ENCODE measurements at regions of chr2 and their contacts with region 1.

Region 1: DNA sequence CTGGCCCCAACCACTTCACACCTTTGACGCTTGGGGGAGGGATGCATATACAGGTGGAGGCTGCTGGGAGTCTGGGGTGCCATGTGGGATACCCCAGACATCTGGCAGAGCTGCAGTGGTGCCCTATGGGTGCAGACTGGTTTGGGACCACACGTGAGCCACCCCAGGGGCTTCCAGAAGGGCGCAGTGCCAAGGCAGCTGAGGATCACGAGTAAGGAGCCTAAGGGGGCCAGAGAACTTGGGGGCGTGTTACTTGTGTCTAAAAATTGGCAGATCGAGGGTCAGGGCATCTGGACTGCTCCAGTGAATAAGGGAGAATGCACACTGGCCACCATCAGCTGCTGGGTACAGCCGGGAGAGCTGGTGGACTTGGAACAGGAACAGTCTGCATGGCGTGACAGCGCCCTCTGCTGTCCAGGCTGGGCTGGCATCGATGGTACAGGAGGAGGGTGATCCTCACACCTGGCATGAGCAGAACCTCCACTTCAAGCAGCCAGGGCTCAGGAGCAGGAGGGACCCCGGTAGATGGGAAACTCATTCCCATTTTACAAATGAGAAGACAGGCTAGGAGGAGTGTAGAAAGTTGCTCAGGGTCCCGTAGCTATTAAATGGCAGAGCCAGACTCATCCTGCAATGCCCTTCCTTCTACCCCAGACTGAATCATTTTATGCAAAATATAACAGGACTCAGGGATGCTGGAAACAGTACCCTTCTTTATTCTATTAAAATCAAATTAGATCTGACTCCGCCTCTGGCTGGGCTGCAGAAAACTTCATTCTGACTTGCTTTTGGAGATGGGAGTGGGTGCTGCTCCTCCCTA is 60.4 kb downstream of the ATOH8 start:
- DNase-seq: peak; percentile 87
- H3K4me3 Mint-ChIP-seq: no peak overlapping the region
- H3K27ac Mint-ChIP-seq: no peak overlapping the region
- H3K4me1 Mint-ChIP-seq: no peaks in the 10 kb centered on the region
- H3K27me3 Mint-ChIP-seq: peaks cover 6% of the 10 kb centered on the region

Region 2: GRCh38 chr2:85642725-85643124 is 171.5 kb before region 1 on chr2:
- CTCF ChIA-PET with region 1: interaction called, 17 read pairs
- POLR2A ChIA-PET with region 1: no interaction called
- DNase-seq: no peak
- H3K4me3 Mint-ChIP-seq: no peak overlapping the region
- H3K27ac Mint-ChIP-seq: peak overlapping the region; percentile 42
- H3K4me1 Mint-ChIP-seq: peaks cover 20% of the 10 kb centered on the region
- H3K27me3 Mint-ChIP-seq: no peaks in the 10 kb centered on the region

Region 3: GRCh38 chr2:85728883-85729824 is 85.0 kb before region 1 on chr2:
- CTCF ChIA-PET with region 1: interaction called, 26 read pairs
- POLR2A ChIA-PET with region 1: no interaction called
- DNase-seq: peak; percentile 73
- H3K4me3 Mint-ChIP-seq: no peak overlapping the region
- H3K27ac Mint-ChIP-seq: no peak overlapping the region
- H3K4me1 Mint-ChIP-seq: peaks cover 6% of the 10 kb centered on the region
- H3K27me3 Mint-ChIP-seq: peaks cover 15% of the 10 kb centered on the region

Region 4: DNA sequence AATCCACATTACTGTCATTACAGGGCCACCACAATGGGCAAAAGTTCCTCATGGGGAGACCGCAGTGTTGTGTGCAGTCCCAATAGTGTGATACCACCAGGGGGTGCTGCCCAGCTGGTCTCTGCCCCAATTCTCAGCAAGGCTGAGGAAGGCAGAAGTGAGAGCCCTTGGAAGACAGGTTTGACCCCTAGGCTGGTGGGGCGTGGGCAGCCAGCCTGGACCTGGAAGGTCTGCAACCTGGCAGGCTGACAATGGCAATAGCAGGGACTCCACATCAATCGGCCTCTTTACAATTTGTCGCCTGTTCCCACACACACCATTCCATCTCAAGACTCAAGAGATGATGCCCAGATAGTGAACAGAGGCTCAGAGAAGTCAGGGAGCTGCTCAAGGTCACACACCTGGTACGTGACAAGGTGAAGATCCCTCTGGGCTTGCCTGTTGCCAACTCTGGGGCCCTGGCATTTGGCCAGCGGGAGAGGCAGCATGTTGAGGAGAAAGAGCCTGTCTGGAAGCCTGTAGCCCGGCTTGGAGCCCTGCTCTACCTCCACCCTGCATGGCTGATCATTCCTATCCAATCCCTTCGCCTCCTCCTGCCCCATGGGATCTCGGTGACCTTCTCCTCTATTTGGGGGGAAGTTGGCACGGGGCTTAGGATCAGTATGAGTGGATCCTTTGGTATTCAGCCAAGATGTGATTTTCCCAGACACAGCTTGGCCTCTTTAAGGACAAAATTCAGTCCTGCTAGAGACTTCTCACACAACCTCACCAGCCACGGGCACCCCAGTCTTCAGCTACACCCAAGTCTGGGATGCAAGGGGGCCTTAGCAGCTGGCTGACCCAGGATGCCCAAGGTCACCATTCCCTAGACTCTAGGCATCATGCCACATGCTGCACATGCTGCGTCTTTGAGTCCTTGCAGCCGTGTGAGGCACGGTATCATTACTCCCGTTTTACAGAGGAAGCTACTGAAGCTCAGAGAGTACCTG is 63.3 kb before region 1 on chr2:
- CTCF ChIA-PET with region 1: interaction called, 33 read pairs
- POLR2A ChIA-PET with region 1: no interaction called
- DNase-seq: peak; percentile 67
- H3K4me3 Mint-ChIP-seq: no peak overlapping the region
- H3K27ac Mint-ChIP-seq: no peak overlapping the region
- H3K4me1 Mint-ChIP-seq: peaks cover 14% of the 10 kb centered on the region
- H3K27me3 Mint-ChIP-seq: peaks cover 75% of the 10 kb centered on the region

Region 5: DNA sequence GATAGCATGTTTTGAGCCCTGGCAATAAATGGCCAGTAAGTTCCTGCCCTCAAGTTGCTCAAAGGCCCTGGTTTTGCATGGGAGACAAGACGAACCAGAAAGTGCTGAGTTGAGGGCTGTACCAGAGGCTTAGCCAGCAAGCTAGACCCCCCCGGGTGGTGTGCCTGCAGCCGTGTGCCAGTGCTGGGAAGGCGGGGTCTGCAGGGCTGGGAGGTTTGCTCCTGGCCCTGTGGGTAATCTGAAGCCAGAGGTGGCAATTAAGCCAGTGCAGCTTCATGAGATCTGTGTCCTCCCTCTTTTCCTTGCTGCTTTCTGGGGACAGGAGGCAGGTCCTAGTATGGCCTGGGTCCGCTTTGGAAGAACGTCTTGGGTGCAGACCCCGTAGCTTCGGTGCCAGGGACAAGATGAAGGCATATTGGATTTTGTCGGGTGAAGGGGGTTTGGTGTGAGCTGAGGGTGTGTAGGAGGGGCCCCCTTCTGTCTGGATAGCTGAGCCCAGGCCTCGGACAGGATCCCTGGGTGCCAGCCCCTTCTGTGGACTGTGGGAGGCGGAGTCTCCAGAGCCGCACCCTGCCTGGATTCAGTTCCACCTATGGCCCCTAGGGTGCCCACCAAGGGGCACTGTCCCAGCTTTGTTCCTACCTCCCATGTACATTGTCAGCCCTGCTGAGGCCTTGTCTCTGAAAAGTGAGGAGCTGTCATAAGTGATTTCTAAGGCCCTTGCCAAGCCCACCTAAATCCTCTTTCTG is 44.8 kb before region 1 on chr2:
- CTCF ChIA-PET with region 1: no interaction called
- POLR2A ChIA-PET with region 1: no interaction called
- DNase-seq: no peak
- H3K4me3 Mint-ChIP-seq: no peak overlapping the region
- H3K27ac Mint-ChIP-seq: no peak overlapping the region
- H3K4me1 Mint-ChIP-seq: no peaks in the 10 kb centered on the region
- H3K27me3 Mint-ChIP-seq: peaks cover 48% of the 10 kb centered on the region

Region 6: DNA sequence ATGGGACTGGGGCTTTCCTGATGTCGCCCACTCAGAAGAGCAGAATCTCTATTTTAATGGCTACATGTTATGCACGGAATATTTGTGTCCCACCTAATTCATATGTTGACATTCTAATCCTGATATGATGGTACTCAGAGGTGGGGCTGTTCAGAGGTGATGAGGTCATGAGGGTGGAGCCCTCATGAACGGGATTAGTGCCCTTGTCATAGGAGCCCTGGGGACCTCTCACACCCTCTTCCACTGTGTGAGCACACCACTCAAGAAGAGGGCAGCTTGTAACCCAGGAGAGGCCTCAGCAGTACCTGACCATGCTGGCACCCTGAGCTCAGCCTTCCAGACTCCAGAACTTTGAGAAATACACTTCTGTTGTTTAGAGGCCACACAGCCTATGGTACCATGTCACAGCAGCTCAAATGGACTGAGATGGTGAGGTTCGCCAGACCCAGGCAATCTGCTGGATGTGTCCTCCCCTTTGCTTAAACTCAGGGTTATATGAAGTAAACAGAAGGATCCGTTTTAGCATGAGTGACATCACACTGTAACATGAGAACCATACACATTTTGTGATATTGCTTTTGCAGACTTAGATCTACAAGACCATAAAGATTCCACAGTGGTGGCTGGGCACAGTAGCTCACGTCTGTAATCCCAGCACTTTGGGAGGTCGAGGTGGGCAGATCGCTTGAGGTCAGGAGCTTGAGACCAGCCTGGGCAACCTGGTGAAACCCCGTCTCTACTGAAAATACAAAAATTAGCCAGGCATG is 11.7 kb before region 1 on chr2:
- CTCF ChIA-PET with region 1: interaction called, 10 read pairs
- POLR2A ChIA-PET with region 1: no interaction called
- DNase-seq: no peak
- H3K4me3 Mint-ChIP-seq: no peak overlapping the region
- H3K27ac Mint-ChIP-seq: no peak overlapping the region
- H3K4me1 Mint-ChIP-seq: peaks cover 6% of the 10 kb centered on the region
- H3K27me3 Mint-ChIP-seq: peaks cover 3% of the 10 kb centered on the region

Region 7: DNA sequence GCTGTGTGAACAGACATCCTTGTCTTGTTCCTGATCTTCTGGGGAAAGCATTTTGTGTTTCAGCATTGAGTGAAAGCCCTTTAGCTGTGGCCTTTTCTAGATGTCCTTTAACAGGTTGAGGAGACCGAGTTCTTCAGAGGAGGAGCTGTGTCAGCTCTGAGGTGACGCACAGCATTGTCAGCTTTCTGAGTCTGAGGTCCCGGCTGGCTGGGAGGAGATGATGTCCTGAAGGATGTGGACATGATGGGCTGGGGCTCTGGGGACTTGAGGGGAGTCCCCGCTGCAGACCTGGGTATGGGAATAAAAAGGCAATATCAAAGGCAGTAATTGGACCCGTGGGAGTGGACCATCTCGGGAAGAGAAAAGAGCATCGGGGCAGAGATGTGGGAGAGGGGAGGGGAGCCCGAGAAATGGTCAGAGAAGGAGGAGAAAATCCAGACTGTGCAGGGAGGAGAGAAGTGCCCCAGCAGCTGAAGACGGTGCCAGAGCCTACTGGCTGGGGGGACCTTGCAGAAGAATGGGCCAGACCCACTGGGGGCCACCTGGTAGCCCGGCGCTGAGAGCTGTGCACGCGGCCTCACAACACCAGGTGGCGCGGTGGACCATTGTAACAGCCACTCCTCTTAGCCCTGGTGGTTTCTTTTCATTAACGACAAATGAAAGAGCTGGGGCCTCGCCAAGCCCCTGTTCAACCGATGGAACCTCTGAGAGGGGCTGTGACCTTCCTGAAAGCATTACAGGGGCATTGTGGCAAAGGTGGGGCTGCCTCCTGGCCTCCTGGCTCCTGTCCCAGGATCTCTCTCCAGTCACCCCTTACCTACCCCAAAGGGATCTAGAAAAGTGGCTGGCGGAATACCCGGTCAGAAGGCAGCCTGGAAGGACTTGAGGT is 13.0 kb after region 1 on chr2:
- CTCF ChIA-PET with region 1: interaction called, 11 read pairs
- POLR2A ChIA-PET with region 1: no interaction called
- DNase-seq: peak; percentile 83
- H3K4me3 Mint-ChIP-seq: no peak overlapping the region
- H3K27ac Mint-ChIP-seq: peak overlapping the region; percentile 72
- H3K4me1 Mint-ChIP-seq: peaks cover 31% of the 10 kb centered on the region
- H3K27me3 Mint-ChIP-seq: peaks cover 24% of the 10 kb centered on the region

Region 8: GRCh38 chr2:85844486-85844885 is 30.3 kb after region 1 on chr2:
- CTCF ChIA-PET with region 1: no interaction called
- POLR2A ChIA-PET with region 1: no interaction called
- DNase-seq: no peak
- H3K4me3 Mint-ChIP-seq: no peak overlapping the region
- H3K27ac Mint-ChIP-seq: no peak overlapping the region
- H3K4me1 Mint-ChIP-seq: peaks cover 13% of the 10 kb centered on the region
- H3K27me3 Mint-ChIP-seq: no peaks in the 10 kb centered on the region

Region 9: GRCh38 chr2:85949280-85949679 is 135.1 kb after region 1 on chr2:
- CTCF ChIA-PET with region 1: no interaction called
- POLR2A ChIA-PET with region 1: no interaction called
- DNase-seq: no peak
- H3K4me3 Mint-ChIP-seq: no peak overlapping the region
- H3K27ac Mint-ChIP-seq: no peak overlapping the region
- H3K4me1 Mint-ChIP-seq: peaks cover 5% of the 10 kb centered on the region
- H3K27me3 Mint-ChIP-seq: peaks cover 8% of the 10 kb centered on the region

Region 10: DNA sequence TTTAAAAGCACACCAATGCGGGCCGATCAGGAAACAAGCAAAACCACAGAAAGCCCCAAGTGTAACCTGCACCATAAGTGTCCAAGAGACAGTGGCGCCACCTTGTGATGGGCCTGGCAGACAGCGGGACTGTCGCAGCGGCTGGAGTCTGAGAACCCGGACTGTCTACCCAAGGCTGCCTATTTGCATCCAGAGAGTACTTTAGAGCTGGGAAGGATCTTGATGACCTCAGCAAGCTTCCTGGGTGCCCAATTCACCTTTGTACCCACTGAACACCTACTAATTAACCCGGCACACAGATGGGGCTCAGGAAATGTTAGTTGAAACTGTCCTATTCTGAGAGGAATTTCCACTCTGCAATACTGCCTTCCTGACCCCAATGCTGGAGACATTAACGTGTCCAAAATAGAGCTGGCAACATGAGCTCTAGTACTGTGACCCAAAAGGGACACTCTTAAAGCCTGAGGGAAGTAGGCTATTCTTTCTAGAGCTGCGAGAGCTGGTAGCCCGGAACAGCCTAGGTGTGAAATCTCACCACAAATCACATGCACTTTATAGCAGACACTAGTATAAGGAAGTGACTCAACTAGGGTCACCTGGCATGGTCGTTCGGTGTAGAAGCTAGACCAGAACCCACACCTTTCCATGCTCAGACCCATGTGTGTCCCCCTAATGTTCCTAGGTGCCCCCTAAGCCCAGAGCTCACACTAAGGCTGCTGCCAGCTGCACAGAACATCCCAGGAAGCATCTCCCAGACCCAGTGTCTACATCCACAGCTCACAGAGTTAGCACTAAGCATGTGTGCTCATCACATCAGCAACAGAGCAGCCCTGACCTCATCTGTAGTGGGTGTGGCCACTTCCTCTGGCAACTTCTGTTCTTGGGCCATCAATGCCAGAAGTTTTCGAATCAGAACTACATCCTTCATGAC is 266.1 kb after region 1 on chr2:
- CTCF ChIA-PET with region 1: interaction called, 14 read pairs
- POLR2A ChIA-PET with region 1: no interaction called
- DNase-seq: peak; percentile 91
- H3K4me3 Mint-ChIP-seq: no peak overlapping the region
- H3K27ac Mint-ChIP-seq: peak overlapping the region; percentile 81
- H3K4me1 Mint-ChIP-seq: peaks cover 40% of the 10 kb centered on the region
- H3K27me3 Mint-ChIP-seq: no peaks in the 10 kb centered on the region

Region 11: GRCh38 chr2:86213699-86214502 is 399.7 kb after region 1 on chr2:
- CTCF ChIA-PET with region 1: no interaction called
- POLR2A ChIA-PET with region 1: no interaction called
- DNase-seq: no peak
- H3K4me3 Mint-ChIP-seq: no peak overlapping the region
- H3K27ac Mint-ChIP-seq: no peak overlapping the region
- H3K4me1 Mint-ChIP-seq: peaks cover 24% of the 10 kb centered on the region
- H3K27me3 Mint-ChIP-seq: no peaks in the 10 kb centered on the region